ENCODE measurements at regions of chr9 and their contacts with region 1.

Region 1: GRCh38 chr9:112361601-112362000 is 18.3 kb upstream of the HSDL2 start:
- DNase-seq: no peak

Region 2: GRCh38 chr9:111759762-111760639 is 601.6 kb before region 1 on chr9:
- intact Hi-C with region 1: loop called (anchors 2 kb)
- DNase-seq: no peak

Region 3: DNA sequence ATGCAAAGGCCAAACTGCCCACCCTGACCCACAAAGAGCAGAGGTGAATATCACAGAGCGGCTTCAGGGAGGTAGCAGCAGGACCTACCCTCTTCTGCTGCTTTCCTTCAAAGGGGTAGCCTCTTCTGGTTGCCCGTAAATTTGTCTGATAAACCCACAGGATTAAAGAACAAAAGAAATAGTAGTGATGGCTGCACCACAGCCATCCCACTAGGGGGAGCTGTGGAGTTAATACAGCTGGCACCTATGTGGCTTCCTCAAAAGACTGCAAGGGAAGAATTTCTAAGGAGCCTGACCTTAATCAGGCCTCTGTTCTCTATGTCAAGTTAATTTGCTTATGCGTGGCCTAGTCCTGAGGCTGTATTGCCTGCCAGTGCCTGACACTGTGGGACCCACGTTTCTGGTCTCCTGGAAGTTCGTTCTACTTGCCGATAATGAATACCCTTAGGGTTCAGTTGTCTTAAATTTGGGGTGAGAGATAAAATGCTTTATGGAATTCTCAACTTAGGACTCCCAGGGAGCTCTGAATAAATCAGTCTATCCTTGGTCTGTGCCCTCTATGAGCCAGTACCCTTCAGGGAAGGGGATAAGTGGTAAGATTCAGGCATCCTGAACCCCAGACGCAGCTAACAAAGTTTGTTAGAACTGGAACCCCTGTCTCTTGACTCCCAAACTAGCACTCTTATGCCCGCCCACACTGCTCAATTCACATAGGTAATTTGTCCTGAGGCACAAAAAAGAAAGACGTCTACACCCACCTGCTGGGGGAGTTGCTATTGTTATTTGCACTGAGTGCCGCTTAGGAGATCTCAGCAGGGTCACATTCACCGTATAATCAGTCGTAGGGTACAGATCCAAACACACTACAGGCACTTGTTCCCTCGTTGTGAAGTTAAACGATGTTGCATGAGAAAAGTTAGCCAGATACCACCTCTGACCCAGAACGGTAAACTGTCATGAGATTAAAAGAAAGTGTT is 263.6 kb before region 1 on chr9:
- intact Hi-C with region 1: loop called (anchors 5 kb)
- DNase-seq: no peak